ENCODE measurements at regions of chr15 and their contacts with region 1.

Region 1: GRCh38 chr15:75367913-75368688 is at the start of gene MAN2C1:
- DNase-seq: peak; percentile 96 to 99 (median 96)
- ATAC-seq: peak; percentile 97
- H3K4me3 ChIP-seq: peak within 1 kb of the TSS; percentile 96
- H3K27ac ChIP-seq: peak within 1 kb of the TSS; percentile 96
- H3K4me1 ChIP-seq: peaks cover 12 to 14% of the 10 kb centered on the region in 2 experiments; a peak in 4 of 5 replicates
- H3K27me3 ChIP-seq: no peaks in the 10 kb centered on the region
- CTCF ChIP-seq: peak; percentile 91 to 98 (median 96)
- EP300 ChIP-seq: peak; percentile 21
- POLR2A ChIP-seq: peak; percentile 98
- RAD21 ChIP-seq: peak; percentile 62 to 84
- polyA plus RNA-seq, gene MAN2C1: 2.0 TPM

Region 2: DNA sequence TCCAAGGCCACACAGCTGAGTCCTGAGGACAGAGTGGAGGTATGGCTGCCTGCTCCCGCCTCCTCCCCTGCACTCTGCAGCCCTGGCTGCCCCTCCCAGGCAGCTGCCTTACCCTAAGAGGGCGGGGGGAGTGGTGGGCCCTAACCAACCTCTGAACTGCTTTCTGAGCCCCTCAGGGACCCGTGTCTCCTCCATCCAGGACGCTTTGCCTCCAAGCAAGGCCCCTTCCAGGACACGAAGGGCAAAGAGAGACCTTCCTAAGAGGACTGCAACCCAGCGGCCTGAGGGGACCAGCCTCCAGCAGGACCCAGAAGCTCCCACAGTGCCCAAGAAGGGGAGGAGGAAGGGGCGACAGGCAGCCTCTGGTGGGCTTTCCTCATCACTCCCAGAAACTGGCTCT is 13.6 kb before region 1 on chr15:
- CTCF ChIA-PET with region 1: no interaction called
- POLR2A ChIA-PET with region 1: interaction called, 36 read pairs
- in situ Hi-C with region 1: no loop called
- intact Hi-C with region 1: no loop called
- DNase-seq: no peak
- ATAC-seq: no peak
- H3K4me3 ChIP-seq: no peak overlapping the region
- H3K27ac ChIP-seq: no peak overlapping the region
- H3K4me1 ChIP-seq: peaks cover 0 to 6% of the 10 kb centered on the region in 2 experiments; a peak in 3 of 5 replicates
- H3K27me3 ChIP-seq: no peaks in the 10 kb centered on the region; a peak in 1 of 5 replicates
- CTCF ChIP-seq: no peak
- EP300 ChIP-seq: no peak
- POLR2A ChIP-seq: no peak
- RAD21 ChIP-seq: no peak

Region 3: DNA sequence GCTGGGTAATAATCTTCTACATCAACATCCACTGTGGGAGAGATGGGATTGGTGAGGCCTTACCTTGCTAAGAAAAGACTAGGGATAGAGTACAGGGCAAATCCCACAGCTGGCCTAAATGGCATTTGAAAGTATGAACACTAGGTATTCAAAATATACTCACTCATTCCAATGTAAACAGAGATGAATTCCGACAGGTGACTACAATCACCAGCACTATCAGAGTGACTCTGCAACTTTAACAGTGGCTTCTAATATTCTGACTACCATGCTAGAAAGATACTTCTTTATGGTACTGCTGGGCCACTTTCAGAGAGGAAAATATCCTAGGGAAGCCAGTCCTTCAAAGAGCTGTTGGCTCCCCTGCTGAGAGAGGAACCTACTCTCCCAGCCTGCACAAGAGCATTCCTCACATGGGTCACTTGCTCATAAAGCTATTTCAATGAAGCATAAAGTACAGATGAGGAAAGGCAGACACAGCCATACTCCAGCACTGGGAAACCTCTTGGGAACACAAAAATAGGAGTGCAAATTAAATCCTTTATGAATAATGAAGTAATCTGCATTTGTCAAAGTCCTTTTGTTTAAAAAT is 21.8 kb after region 1 on chr15:
- CTCF ChIA-PET with region 1: no interaction called
- POLR2A ChIA-PET with region 1: interaction called, 10 read pairs
- in situ Hi-C with region 1: no loop called
- intact Hi-C with region 1: no loop called
- DNase-seq: no peak
- ATAC-seq: no peak
- H3K4me3 ChIP-seq: no peak overlapping the region
- H3K27ac ChIP-seq: no peak overlapping the region
- H3K4me1 ChIP-seq: no peaks in the 10 kb centered on the region
- H3K27me3 ChIP-seq: no peaks in the 10 kb centered on the region
- CTCF ChIP-seq: no peak
- EP300 ChIP-seq: no peak
- POLR2A ChIP-seq: no peak
- RAD21 ChIP-seq: no peak

Region 4: GRCh38 chr15:75453703-75454470 is 85.8 kb after region 1 on chr15:
- CTCF ChIA-PET with region 1: no interaction called
- POLR2A ChIA-PET with region 1: interaction called, 6 read pairs
- in situ Hi-C with region 1: no loop called
- intact Hi-C with region 1: loop called (anchors 1 kb)
- DNase-seq: peak; percentile 88 to 99 (median 92)
- ATAC-seq: peak; percentile 64
- H3K4me3 ChIP-seq: peak overlapping the region; percentile 86
- H3K27ac ChIP-seq: peak overlapping the region; percentile 97
- H3K4me1 ChIP-seq: peaks cover 13 to 33% of the 10 kb centered on the region in 2 experiments; a peak in 3 of 5 replicates
- H3K27me3 ChIP-seq: no peaks in the 10 kb centered on the region
- CTCF ChIP-seq: peak in 1 of 3 experiments; percentile 11; a peak in 1 of 6 replicates
- EP300 ChIP-seq: no peak
- POLR2A ChIP-seq: peak; percentile 87
- RAD21 ChIP-seq: no peak

Region 5: DNA sequence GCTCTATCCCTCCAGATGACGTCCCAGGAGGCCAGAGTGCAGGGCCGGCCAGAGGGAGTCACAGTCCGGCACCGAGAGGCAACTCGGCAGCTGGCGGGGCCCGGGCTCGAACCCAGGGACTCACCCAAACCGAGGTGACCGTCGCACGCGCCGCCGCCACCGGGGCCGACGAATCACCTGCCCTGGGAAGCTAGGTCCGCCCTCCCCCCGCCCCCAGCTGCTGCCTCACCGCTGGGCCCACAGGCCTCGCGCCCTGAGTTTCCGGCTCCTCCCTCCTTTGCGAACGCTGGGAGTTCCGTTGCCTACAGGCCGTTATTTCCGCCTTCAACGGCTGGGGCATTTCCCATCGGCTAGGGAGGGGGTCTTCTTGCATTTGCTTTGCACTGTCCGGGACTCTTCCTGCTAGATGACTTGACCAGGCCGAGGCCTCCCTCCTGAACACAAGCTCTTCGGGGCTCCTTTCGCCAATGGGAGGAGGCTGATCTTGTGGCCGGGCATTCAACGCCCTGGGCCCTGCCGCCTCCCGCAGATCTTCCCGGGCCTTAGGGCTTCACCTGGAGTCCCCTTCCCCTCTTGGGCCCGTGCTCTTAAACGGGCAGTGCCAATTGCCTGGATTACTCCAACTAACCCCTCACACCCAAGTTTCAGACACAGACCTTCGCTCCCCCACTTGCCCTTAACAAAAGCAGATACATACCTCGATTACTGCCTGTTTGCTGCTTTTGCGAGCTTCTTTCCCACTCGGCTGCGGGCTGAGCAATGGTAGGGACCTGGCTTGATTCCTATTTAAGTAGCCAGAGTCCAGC is 257.6 kb after region 1 on chr15 and contains the start of gene SNUPN:
- CTCF ChIA-PET with region 1: no interaction called
- POLR2A ChIA-PET with region 1: interaction called, 11 read pairs
- in situ Hi-C with region 1: no loop called
- intact Hi-C with region 1: no loop called
- DNase-seq: peak; percentile 95 to 99 (median 96)
- ATAC-seq: peak; percentile 91
- H3K4me3 ChIP-seq: peak within 1 kb of the TSS; percentile 99
- H3K27ac ChIP-seq: peak within 1 kb of the TSS; percentile 91
- H3K4me1 ChIP-seq: peaks cover 20 to 23% of the 10 kb centered on the region in 2 experiments
- H3K27me3 ChIP-seq: no peaks in the 10 kb centered on the region
- CTCF ChIP-seq: no peak
- EP300 ChIP-seq: peak; percentile 77; the same call in 1 of the 2 replicates
- POLR2A ChIP-seq: peak; percentile 92
- RAD21 ChIP-seq: no peak
- polyA plus RNA-seq, gene SNUPN: 69.3 to 78.3 TPM

Region 6: GRCh38 chr15:75639709-75640482 is 271.8 kb after region 1 on chr15 and contains the start of gene IMP3:
- CTCF ChIA-PET with region 1: interaction called, 9 read pairs
- POLR2A ChIA-PET with region 1: interaction called, 10 read pairs
- in situ Hi-C with region 1: no loop called
- intact Hi-C with region 1: loop called (anchors 2 kb)
- DNase-seq: peak; percentile 97 to 99 (median 98)
- ATAC-seq: peak; percentile 94
- H3K4me3 ChIP-seq: peak within 1 kb of the TSS; percentile 93
- H3K27ac ChIP-seq: peak within 1 kb of the TSS; percentile 86
- H3K4me1 ChIP-seq: peaks cover 18 to 34% of the 10 kb centered on the region in 2 experiments
- H3K27me3 ChIP-seq: no peaks in the 10 kb centered on the region; a peak in 1 of 5 replicates
- CTCF ChIP-seq: no peak
- EP300 ChIP-seq: no peak
- POLR2A ChIP-seq: peak; percentile 98
- RAD21 ChIP-seq: no peak
- polyA plus RNA-seq, gene IMP3: 14.5 to 15.5 TPM

Region 7: GRCh38 chr15:75672646-75673425 is 304.7 kb after region 1 on chr15:
- CTCF ChIA-PET with region 1: no interaction called
- POLR2A ChIA-PET with region 1: no interaction called
- in situ Hi-C with region 1: loop called (anchors 5 kb)
- intact Hi-C with region 1: no loop called
- DNase-seq: no peak
- ATAC-seq: peak; percentile 24
- H3K4me3 ChIP-seq: no peak overlapping the region
- H3K27ac ChIP-seq: no peak overlapping the region
- H3K4me1 ChIP-seq: peaks cover 10 to 57% of the 10 kb centered on the region in 2 experiments; a peak in 4 of 5 replicates
- H3K27me3 ChIP-seq: no peaks in the 10 kb centered on the region
- CTCF ChIP-seq: no peak
- EP300 ChIP-seq: no peak
- POLR2A ChIP-seq: no peak
- RAD21 ChIP-seq: no peak